ENCODE measurements at regions of chr1 and their contacts with region 1.

Region 1: DNA sequence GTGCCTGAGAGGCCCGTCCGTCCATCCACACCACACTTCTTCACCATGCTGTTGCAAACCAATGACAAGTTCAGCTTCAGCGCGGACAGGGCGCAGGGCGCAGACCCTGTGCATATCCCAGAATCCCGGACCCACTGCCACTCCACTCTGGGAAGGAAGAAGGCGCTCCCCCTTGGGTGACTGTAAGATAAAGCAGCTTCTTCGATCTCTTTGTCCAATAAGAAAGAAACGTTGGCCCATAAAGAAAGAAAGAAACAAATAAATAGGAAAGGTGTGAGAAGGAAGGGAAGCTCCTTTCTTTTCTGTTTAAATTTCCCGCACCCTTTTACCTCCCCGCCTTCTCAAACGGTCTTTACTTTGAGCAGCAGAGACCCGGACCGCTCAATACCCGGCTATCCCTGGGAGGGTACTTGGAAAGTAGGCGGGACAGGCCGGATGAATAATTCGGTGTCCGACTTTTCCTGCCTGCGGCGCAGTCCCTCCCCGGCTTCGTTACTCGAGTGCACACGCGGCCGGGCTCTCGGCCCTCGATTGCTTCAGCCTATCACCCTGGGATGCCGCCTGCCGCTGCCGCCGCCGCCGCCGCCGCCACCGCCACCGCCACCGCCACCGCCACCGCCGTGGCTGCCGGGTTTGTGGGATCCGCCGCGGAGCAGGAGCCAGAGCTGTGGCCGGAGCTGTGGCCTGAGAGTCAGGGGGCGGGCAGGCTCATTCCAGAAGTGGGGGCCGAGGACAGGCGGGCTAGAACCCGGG is 523 bp upstream of the RASAL2 start:
- DNase-seq: peak; percentile 95 to 97
- H3K4me3 ChIP-seq: peak overlapping the region; percentile 99
- H3K4me3 Mint-ChIP-seq: peak overlapping the region; percentile 92
- H3K27ac Mint-ChIP-seq: peak overlapping the region; percentile 92
- H3K4me1 ChIP-seq: peaks cover 34% of the 10 kb centered on the region
- H3K4me1 Mint-ChIP-seq: peaks cover 26% of the 10 kb centered on the region
- H3K27me3 ChIP-seq: no peaks in the 10 kb centered on the region
- H3K27me3 Mint-ChIP-seq: no peaks in the 10 kb centered on the region
- CTCF ChIP-seq: no peak

Region 2: DNA sequence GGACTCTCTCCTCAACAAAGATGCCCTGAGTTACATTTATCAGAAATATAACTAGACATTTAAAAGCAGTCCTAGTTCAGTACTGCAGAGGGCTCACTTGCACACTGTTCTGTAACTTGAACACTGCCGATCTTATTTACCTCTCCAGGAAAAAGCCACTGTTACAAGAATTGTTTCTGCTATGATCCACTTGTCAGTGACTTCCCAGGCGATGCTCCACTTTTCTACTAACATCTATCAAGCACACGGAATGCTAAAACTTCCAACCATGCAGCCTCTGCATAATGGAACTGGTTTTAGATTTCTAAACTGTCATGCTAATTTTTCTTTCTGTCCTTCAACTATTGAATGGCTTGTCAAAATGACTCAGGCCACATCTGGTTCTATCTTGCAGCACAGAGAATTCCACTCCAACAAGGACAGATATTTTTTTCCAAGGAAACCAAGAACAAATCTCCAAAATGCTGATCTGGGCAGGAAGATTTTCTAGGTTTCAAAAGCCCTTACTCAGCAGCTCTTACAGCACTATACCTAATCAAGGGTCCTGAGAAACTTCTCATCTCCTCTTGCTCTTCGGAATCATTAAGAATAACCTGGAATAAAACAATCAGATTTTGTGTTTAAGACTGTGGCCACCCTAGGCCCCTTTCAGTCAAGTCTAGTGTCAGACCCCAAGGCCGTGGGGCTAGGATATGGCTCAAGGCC is 133.4 kb before region 1 on chr1:
- CTCF ChIA-PET with region 1: no interaction called
- POLR2A ChIA-PET with region 1: no interaction called
- intact Hi-C with region 1: loop called (anchors 1 kb)
- DNase-seq: peak in 1 of 2 experiments; percentile 32
- H3K4me3 ChIP-seq: no peak overlapping the region
- H3K4me3 Mint-ChIP-seq: no peak overlapping the region
- H3K27ac Mint-ChIP-seq: no peak overlapping the region
- H3K4me1 ChIP-seq: 0 out of 2 replicates have a peak, but pooled peaks cover 4% of the 10 kb centered on the region
- H3K4me1 Mint-ChIP-seq: no peaks in the 10 kb centered on the region
- H3K27me3 ChIP-seq: no peaks in the 10 kb centered on the region
- H3K27me3 Mint-ChIP-seq: no peaks in the 10 kb centered on the region
- CTCF ChIP-seq: peak; percentile 36 to 44

Region 3: GRCh38 chr1:178031856-178032320 is 61.5 kb before region 1 on chr1:
- CTCF ChIA-PET with region 1: interaction called, 13 read pairs
- POLR2A ChIA-PET with region 1: no interaction called
- intact Hi-C with region 1: loop called (anchors 1 kb)
- DNase-seq: peak; percentile 80 to 83
- H3K4me3 ChIP-seq: no peak overlapping the region
- H3K4me3 Mint-ChIP-seq: no peak overlapping the region
- H3K27ac Mint-ChIP-seq: no peak overlapping the region
- H3K4me1 ChIP-seq: peaks cover 29% of the 10 kb centered on the region
- H3K4me1 Mint-ChIP-seq: peaks cover 13% of the 10 kb centered on the region
- H3K27me3 ChIP-seq: no peaks in the 10 kb centered on the region
- H3K27me3 Mint-ChIP-seq: no peaks in the 10 kb centered on the region
- CTCF ChIP-seq: peak; percentile 76 to 91

Region 4: DNA sequence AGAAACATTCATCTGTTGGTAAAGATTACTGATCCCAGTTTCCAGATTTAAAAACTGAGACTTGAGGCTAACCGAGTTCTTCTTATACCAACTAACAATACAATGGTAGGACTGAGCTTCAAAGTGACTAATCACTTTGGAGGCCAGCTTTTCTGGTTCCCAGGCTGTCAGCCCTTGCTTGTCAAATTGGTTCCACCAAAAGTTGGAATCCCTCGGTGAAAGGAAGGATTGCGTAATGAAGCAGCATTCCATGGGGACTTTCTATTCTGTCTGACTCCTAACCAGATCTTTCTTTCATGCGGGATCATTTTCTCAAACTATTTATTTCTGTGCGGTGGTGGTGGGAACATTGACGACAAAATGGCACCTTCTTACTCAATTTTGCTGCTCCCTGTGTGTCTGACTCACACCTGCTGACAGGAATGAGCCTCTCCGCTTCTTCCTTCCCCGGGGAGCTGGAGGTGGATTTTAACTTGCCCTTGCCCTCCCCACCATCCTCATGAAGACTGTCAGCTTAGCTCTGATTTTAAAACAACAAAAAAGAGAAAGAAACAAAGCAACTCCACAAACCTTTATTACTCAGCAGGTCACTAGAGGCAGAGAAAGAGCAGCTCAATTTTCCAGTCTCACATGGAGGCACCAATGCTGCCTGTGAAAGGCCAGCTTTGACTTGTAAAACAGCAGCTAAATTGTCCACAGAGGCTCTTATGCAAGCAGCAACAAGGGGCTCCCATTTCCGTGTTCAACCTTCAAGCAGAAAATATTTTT is 32.4 kb before region 1 on chr1:
- CTCF ChIA-PET with region 1: no interaction called
- POLR2A ChIA-PET with region 1: no interaction called
- intact Hi-C with region 1: loop called (anchors 2 kb)
- DNase-seq: peak in 1 of 2 experiments; percentile 31
- H3K4me3 ChIP-seq: no peak overlapping the region
- H3K4me3 Mint-ChIP-seq: no peak overlapping the region
- H3K27ac Mint-ChIP-seq: peak overlapping the region; percentile 69
- H3K4me1 ChIP-seq: peaks cover 16% of the 10 kb centered on the region
- H3K4me1 Mint-ChIP-seq: peaks cover 14% of the 10 kb centered on the region
- H3K27me3 ChIP-seq: no peaks in the 10 kb centered on the region
- H3K27me3 Mint-ChIP-seq: no peaks in the 10 kb centered on the region
- CTCF ChIP-seq: no peak

Region 5: DNA sequence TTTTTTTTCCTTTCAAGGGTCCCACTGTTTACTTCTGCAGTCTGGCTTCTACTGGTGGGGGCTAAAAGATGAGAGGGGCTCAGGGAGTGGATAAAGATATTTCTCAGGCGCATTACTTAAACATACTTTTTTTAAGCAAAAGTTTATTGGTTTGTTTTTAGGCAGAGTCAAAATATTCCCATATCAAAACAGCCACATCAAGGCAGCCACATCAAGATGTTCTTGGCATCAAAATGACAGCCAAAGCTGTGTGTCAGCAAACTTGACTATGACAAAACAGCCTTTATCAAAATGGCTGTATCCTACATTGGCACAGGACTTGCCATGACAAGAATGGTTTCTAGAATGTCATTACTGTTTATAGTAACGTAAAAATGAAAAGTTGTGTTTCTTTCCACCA is 21.6 kb before region 1 on chr1:
- CTCF ChIA-PET with region 1: no interaction called
- POLR2A ChIA-PET with region 1: no interaction called
- intact Hi-C with region 1: no loop called
- DNase-seq: no peak
- H3K4me3 ChIP-seq: no peak overlapping the region
- H3K4me3 Mint-ChIP-seq: no peak overlapping the region
- H3K27ac Mint-ChIP-seq: no peak overlapping the region
- H3K4me1 ChIP-seq: no peaks in the 10 kb centered on the region
- H3K4me1 Mint-ChIP-seq: peaks cover 5% of the 10 kb centered on the region
- H3K27me3 ChIP-seq: no peaks in the 10 kb centered on the region
- H3K27me3 Mint-ChIP-seq: no peaks in the 10 kb centered on the region
- CTCF ChIP-seq: no peak

Region 6: DNA sequence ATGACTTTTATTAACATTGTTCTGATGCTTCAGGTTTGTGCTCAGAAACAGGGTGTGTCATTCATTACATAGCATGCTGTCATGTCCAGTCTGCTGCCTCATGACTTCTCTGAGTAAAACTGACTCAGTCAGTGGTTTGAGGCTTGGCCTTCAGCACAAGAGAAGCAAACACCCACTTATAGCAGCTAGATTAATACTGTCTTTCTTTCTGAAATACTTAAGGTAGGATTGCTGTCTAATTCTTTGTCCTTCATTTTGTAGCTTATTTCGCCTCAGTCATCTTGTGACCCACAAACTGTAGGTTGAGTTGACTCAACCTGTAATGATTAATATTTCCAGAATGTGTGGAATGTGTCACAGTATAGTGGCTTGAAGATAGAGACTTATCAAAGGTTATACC is 33.4 kb after region 1 on chr1:
- CTCF ChIA-PET with region 1: interaction called, 5 read pairs
- POLR2A ChIA-PET with region 1: interaction called, 8 read pairs
- intact Hi-C with region 1: loop called (anchors 1 kb)
- DNase-seq: peak; percentile 49 to 57
- H3K4me3 ChIP-seq: no peak overlapping the region; the same call in 1 of the 2 replicates
- H3K4me3 Mint-ChIP-seq: peak overlapping the region; percentile 65
- H3K27ac Mint-ChIP-seq: peak overlapping the region; percentile 96
- H3K4me1 ChIP-seq: peaks cover 59% of the 10 kb centered on the region
- H3K4me1 Mint-ChIP-seq: peaks cover 6% of the 10 kb centered on the region
- H3K27me3 ChIP-seq: no peaks in the 10 kb centered on the region
- H3K27me3 Mint-ChIP-seq: no peaks in the 10 kb centered on the region
- CTCF ChIP-seq: no peak

Region 7: GRCh38 chr1:178189814-178190213 is 96.4 kb after region 1 on chr1:
- CTCF ChIA-PET with region 1: no interaction called
- POLR2A ChIA-PET with region 1: no interaction called
- intact Hi-C with region 1: loop called (anchors 2 kb)
- DNase-seq: peak; percentile 60 to 62
- H3K4me3 ChIP-seq: no peak overlapping the region
- H3K4me3 Mint-ChIP-seq: no peak overlapping the region
- H3K27ac Mint-ChIP-seq: no peak overlapping the region
- H3K4me1 ChIP-seq: peaks cover 10% of the 10 kb centered on the region
- H3K4me1 Mint-ChIP-seq: peaks cover 19% of the 10 kb centered on the region
- H3K27me3 ChIP-seq: no peaks in the 10 kb centered on the region
- H3K27me3 Mint-ChIP-seq: no peaks in the 10 kb centered on the region
- CTCF ChIP-seq: peak; percentile 72 to 77

Region 8: GRCh38 chr1:178282949-178283367 is 189.6 kb after region 1 on chr1:
- CTCF ChIA-PET with region 1: no interaction called
- POLR2A ChIA-PET with region 1: no interaction called
- intact Hi-C with region 1: loop called (anchors 5 kb)
- DNase-seq: no peak
- H3K4me3 ChIP-seq: no peak overlapping the region
- H3K4me3 Mint-ChIP-seq: no peak overlapping the region
- H3K27ac Mint-ChIP-seq: no peak overlapping the region
- H3K4me1 ChIP-seq: peaks cover 2% of the 10 kb centered on the region; the same call in 1 of the 2 replicates
- H3K4me1 Mint-ChIP-seq: peaks cover 20% of the 10 kb centered on the region
- H3K27me3 ChIP-seq: no peaks in the 10 kb centered on the region
- H3K27me3 Mint-ChIP-seq: no peaks in the 10 kb centered on the region
- CTCF ChIP-seq: peak in 1 of 2 experiments; percentile 45

Measured in Caco-2 (cell line).